ENCODE measurements at regions of chr21 and their contacts with region 1.

Region 1: GRCh38 chr21:31180256-31181081 is 142.2 kb upstream of the KRTAP19-8 start:
- DNase-seq: no peak
- ATAC-seq: peak in 1 of 2 donors; percentile 37

Region 2: DNA sequence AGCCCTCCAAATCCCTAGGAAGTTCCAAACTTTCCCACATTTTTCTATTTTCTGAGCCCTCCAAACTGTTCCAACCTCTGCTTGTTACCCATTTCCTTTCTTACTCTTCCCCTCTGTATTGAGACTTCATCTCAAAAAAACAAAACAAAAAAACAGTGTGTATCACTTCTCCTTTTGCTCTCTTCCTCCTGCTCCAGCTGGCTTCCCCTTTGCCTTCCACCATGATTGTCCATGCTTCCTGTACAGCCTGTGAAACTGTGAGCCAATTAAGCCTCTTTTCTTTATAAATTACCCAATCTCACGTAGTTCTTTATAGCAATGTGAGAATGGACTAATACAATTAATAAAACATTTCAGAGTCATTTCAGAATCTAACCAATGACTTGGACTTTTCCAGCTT is 72.6 kb before region 1 on chr21:
- intact Hi-C with region 1: loop called in 1 of 2 experiments (anchors 5 kb)
- DNase-seq: no peak
- ATAC-seq: peak; percentile 38 to 60

Region 3: DNA sequence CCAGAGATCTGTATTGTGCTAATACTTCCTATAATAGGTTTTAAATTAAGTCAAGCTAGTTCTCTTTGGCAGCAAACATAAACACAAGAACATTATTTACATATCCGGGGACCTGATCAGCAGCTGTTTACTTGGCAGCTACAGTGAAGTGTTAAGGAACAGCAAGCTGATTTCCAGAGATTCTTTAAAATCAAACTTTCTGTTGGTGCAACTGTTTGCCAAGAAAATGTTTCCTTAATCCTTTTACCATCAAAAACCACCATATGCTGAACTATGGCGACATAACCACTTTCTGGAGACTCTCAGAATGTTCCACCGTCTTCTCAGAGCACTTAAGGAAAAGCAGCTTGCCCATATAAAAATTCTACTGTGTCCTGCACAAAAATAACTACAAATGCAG is 35.2 kb before region 1 on chr21:
- intact Hi-C with region 1: no loop called
- DNase-seq: no peak
- ATAC-seq: no peak

Measured in left cardiac atrium (tissue), 4 donors.